Ovary (tissue), 10 donors: ENCODE measurements at regions of chr14 and their contacts with region 1.

Region 1: DNA sequence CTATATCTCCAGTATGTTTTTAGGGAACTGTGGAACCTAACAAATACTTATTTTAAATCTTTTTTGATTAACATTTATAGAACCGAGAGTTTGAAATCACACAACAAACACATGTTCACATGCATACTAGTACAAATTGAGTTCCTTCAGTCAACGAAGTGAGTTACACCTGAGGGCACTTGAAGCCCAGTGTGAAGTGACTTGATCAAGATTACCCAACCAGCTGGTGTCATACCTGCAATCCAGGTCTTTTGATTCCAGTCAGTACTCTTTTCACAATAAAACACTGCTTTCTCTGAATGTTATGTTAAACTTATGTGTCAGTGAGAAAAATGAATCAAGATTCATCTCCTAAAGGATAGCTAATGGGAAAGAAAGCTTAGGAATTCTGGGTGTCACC is 35.2 kb downstream of the VRK1 start:
- DNase-seq: no peak
- H3K4me3 ChIP-seq: no peak overlapping the region
- H3K27ac ChIP-seq: no peak overlapping the region
- H3K4me1 ChIP-seq: no peaks in the 10 kb centered on the region
- H3K27me3 ChIP-seq: no peaks in the 10 kb centered on the region
- CTCF ChIP-seq: no peak
- EP300 ChIP-seq: no peak
- POLR2A ChIP-seq: no peak

Region 2: DNA sequence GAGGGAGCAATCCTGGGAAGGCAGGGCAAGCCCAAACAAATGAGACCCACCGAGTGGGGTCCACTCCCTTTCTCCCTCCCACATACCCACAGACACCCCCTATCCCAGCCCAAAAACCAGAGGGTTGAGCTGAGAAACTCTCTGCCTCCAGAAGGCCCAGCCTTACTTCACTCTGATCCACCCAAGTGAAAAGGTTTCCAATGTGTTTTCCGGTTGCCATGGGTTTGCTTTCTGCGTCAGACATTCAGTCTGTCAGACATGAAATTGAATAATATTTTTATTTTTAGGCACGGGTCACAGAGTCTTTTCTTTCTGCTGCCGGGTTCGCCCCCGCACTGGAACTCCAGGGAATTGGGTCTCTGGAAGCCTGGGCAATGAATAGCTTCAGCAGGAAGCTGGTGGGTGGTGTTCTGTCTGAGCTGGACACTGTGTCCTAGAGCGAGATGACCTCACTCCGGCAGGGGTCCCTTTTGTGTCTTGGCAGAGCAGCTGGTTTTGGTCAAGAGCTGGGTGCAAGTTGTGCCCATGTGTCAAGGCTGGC is 1442.8 kb before region 1 on chr14:
- intact Hi-C with region 1: loop called in 1 of 4 experiments (anchors 5 kb)
- DNase-seq: peak in 1 of 5 donors; percentile 25
- H3K4me3 ChIP-seq: no peak overlapping the region
- H3K27ac ChIP-seq: no peak overlapping the region
- H3K4me1 ChIP-seq: no peaks in the 10 kb centered on the region
- H3K27me3 ChIP-seq: no peaks in the 10 kb centered on the region
- CTCF ChIP-seq: no peak
- EP300 ChIP-seq: peak; percentile 60
- POLR2A ChIP-seq: no peak

Region 3: GRCh38 chr14:96538990-96539317 is 293.4 kb before region 1 on chr14:
- intact Hi-C with region 1: no loop called
- DNase-seq: no peak
- H3K4me3 ChIP-seq: no peak overlapping the region
- H3K27ac ChIP-seq: no peak overlapping the region
- H3K4me1 ChIP-seq: no peaks in the 10 kb centered on the region
- H3K27me3 ChIP-seq: no peaks in the 10 kb centered on the region
- CTCF ChIP-seq: no peak
- EP300 ChIP-seq: no peak
- POLR2A ChIP-seq: no peak

Region 4: GRCh38 chr14:96888158-96888557 is 55.8 kb after region 1 on chr14:
- intact Hi-C with region 1: no loop called
- DNase-seq: no peak
- H3K4me3 ChIP-seq: no peak overlapping the region
- H3K27ac ChIP-seq: no peak overlapping the region
- H3K4me1 ChIP-seq: no peaks in the 10 kb centered on the region
- H3K27me3 ChIP-seq: no peaks in the 10 kb centered on the region
- CTCF ChIP-seq: no peak
- EP300 ChIP-seq: no peak
- POLR2A ChIP-seq: no peak